ENCODE measurements at regions of chr19 and their contacts with region 1.

Region 1: DNA sequence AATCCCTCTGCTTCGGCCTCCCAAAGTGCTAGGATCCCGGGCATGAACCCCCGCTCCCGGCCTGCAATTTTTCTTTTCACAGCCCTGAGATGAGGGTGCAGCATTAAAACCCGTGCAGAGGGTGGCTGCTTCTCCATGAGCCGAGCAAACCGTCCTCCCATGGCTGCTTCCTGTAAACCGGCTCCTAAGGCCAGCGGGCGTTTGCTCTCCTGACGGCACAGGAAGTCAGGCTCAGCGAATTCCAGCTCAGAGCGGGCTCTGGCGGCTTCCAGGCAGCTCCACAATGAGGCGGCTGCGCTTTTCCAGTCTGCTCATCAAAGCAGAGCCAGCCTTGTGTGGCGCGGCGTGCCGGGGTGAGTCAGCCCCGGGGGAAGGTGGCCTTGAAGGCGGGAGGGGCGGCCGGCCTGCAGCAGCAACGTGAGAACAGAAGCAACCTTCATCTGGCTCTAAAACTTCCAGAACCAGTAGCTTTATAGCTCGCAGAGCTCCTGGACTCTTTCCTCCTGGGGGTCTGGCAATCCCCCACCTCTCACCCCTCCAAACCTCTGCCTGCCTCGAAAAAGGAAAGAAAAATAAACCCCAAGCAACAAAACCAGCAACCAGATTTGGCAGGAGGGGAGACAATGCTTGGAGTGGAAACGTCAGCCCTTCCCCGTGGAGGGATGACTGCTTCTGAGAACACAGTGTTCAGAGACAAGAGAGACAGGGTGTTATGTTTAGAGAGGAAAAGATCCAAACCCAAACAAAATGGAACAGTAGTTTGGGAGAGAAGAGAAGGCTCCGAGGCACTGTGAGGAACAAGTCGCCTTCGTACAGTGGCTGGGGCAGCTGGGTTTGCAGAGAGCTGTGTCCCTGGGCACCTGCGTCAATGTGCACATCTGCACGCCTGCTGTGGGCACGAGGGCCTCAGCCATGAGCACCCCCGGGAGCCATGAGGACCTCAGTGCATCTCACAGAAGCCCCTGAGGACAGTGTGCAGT is 67.8 kb downstream of the GADD45B start:
- DNase-seq: peak; percentile 92 to 93
- ATAC-seq: peak; percentile 78 to 80
- H3K4me3 ChIP-seq: peak overlapping the region in 3 of 4 donors; percentile 22 to 35 (median 31)
- H3K27ac ChIP-seq: peak overlapping the region; percentile 88 to 94 (median 90)
- H3K4me1 ChIP-seq: peaks cover 59 to 71% of the 10 kb centered on the region in 2 donors
- H3K27me3 ChIP-seq: no peaks in the 10 kb centered on the region
- CTCF ChIP-seq: peak; percentile 11 to 28 (median 23)
- POLR2A ChIP-seq: peak; percentile 35 to 67

Region 2: GRCh38 chr19:2424685-2425621 is 118.8 kb before region 1 on chr19:
- in situ Hi-C with region 1: no loop called
- intact Hi-C with region 1: no loop called
- DNase-seq: peak; percentile 29 to 59
- ATAC-seq: no peak
- H3K4me3 ChIP-seq: no peak overlapping the region
- H3K27ac ChIP-seq: peak overlapping the region; percentile 89 to 98 (median 92)
- H3K4me1 ChIP-seq: peaks cover 23 to 30% of the 10 kb centered on the region in 2 donors
- H3K27me3 ChIP-seq: no peaks in the 10 kb centered on the region
- CTCF ChIP-seq: peak; percentile 20 to 59 (median 37)
- POLR2A ChIP-seq: no peak

Region 3: DNA sequence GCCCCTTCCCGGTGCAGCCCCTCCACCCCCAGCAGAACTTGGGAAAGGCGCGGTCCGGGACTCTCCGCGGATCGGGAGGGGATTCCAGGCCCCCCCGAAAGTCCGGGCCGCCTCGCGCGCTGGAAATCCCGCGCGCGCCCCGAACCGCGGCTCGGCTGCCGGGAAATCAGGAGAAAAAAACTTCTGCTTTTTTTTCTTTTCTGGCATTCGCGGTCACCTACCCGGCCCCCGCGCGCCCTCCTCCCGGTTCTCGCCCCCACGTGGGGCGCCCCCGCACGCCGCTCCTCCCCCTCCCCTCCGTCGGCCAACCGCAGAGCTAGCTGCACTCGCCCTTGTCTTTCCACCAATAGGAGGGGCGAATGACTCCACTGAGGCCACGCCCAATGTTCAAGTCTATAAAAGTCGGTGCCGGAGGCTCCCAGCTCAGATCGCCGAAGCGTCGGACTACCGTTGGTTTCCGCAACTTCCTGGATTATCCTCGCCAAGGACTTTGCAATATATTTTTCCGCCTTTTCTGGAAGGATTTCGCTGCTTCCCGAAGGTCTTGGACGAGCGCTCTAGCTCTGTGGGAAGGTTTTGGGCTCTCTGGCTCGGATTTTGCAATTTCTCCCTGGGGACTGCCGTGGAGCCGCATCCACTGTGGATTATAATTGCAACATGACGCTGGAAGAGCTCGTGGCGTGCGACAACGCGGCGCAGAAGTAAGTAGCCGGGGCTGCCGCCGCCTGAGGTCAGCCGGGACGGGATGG is 67.9 kb before region 1 on chr19 and contains the start of gene GADD45B:
- in situ Hi-C with region 1: loop called in 3 of 4 experiments (anchors 5 to 10 kb)
- intact Hi-C with region 1: loop called (anchors 1 kb)
- DNase-seq: peak; percentile 95 to 96
- ATAC-seq: peak; percentile 85 to 86
- H3K4me3 ChIP-seq: peak within 1 kb of the TSS; percentile 66 to 92 (median 84)
- H3K27ac ChIP-seq: peak within 1 kb of the TSS; percentile 81 to 98 (median 90)
- H3K4me1 ChIP-seq: peaks cover 21 to 42% of the 10 kb centered on the region in 2 donors
- H3K27me3 ChIP-seq: no peaks in the 10 kb centered on the region
- CTCF ChIP-seq: peak in 1 of 5 experiments; percentile 15
- POLR2A ChIP-seq: peak; percentile 100
- total RNA-seq, gene GADD45B: 32.2 to 48.7 (median 41.7) TPM

Region 4: DNA sequence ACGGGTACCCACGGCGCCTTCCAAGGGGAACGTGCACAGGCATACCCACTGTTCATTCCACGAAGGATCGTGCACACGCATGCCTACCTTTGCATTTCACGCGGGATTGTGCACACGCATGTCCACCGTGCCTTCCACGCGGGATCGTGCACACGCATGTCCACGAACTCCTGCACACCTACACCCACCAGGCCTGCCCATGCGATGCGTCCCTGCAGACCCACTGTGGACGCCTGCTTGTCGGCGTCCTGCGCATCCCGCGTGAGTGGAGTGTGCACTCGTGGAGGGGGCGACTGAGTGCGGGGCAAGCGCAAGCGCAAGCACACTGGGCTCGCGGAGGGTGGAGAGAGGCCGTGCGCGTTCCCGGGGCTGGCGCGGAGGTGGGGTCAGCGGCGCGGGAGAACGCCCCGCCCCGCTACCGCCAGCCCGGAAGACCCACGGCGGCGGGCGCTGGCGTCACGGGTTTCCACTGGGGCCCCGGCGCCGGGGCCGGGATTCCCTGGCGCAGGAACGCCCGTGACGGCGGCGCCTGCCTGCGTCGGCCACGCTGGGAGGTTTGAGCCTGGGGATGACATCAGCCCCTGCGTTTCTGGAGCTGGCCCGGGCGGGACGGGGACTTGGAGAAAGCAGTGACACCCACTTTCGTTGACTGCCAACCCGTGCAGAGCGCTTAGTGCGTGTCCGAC is 49.2 kb before region 1 on chr19:
- in situ Hi-C with region 1: no loop called
- intact Hi-C with region 1: loop called (anchors 5 kb)
- DNase-seq: peak; percentile 46 to 71
- ATAC-seq: peak; percentile 50 to 57
- H3K4me3 ChIP-seq: peak overlapping the region; percentile 57 to 80 (median 60)
- H3K27ac ChIP-seq: peak overlapping the region; percentile 89 to 95 (median 91)
- H3K4me1 ChIP-seq: peaks cover 27 to 45% of the 10 kb centered on the region in 2 donors
- H3K27me3 ChIP-seq: no peaks in the 10 kb centered on the region
- CTCF ChIP-seq: no peak
- POLR2A ChIP-seq: peak in 1 of 2 donors; percentile 15

Region 5: GRCh38 chr19:2578901-2579677 is 35.3 kb after region 1 on chr19:
- in situ Hi-C with region 1: no loop called
- intact Hi-C with region 1: loop called (anchors 1 kb)
- DNase-seq: peak; percentile 81 to 88
- ATAC-seq: peak; percentile 87 to 88
- H3K4me3 ChIP-seq: peak overlapping the region; percentile 55 to 66 (median 60)
- H3K27ac ChIP-seq: peak overlapping the region; percentile 81 to 89 (median 88)
- H3K4me1 ChIP-seq: peaks cover 32 to 38% of the 10 kb centered on the region in 2 donors
- H3K27me3 ChIP-seq: no peaks in the 10 kb centered on the region
- CTCF ChIP-seq: peak; percentile 96 to 98 (median 98)
- POLR2A ChIP-seq: peak in 1 of 2 donors; percentile 24

Region 6: DNA sequence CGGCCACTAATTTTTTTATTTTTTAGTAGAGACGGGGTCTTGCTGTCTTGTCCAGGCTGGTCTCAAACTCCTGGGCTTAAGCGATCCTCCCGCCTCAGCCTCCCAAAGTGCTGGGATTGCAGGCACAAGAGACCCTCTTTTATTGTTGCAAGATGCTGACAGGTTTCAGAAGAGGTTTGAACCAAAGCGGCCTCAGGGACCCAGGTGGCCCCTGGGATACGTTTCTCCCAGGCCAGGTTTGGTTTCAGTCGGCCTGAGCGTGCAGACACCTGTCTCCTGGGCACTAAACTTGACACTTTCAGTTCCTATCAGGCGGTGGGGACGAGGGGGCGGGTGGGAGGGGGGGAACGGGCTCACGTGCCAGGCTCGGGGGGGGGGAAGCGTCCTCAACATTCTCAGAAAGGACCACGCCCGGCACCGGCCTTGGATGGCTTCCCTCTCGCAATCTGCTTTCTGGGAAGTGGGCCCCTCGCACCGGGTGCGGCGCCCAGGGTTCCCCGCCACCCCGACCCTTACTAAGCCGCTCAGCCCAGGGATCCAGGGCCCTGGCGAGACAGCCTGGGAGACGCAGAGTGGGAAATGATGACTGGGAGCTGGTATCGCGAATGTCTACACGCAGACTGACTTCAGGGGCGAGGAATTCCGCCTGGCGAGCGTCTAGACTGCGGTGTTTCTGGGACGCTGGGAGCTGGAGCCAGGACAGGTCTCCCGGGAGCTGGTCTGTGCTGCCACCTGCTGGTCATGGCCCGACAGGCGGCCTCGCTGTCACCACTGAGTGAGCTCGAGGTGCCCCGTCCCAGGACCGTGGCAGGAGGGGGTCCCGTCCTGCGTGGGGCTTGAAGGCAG is 67.1 kb after region 1 on chr19:
- in situ Hi-C with region 1: no loop called
- intact Hi-C with region 1: loop called (anchors 2 kb)
- DNase-seq: peak; percentile 80 to 83
- ATAC-seq: peak; percentile 95 to 96
- H3K4me3 ChIP-seq: peak overlapping the region; percentile 52 to 88 (median 64)
- H3K27ac ChIP-seq: peak overlapping the region; percentile 72 to 84 (median 84)
- H3K4me1 ChIP-seq: no peaks in the 10 kb centered on the region
- H3K27me3 ChIP-seq: no peaks in the 10 kb centered on the region
- CTCF ChIP-seq: peak; percentile 94 to 99 (median 99)
- POLR2A ChIP-seq: peak in 1 of 2 donors; percentile 13

Region 7: GRCh38 chr19:2627319-2627829 is 83.6 kb after region 1 on chr19:
- in situ Hi-C with region 1: no loop called
- intact Hi-C with region 1: loop called (anchors 1 kb)
- DNase-seq: peak; percentile 89 to 93
- ATAC-seq: peak; percentile 93 to 96
- H3K4me3 ChIP-seq: no peak overlapping the region
- H3K27ac ChIP-seq: peak overlapping the region; percentile 81 to 94 (median 88)
- H3K4me1 ChIP-seq: peaks cover 19 to 24% of the 10 kb centered on the region in 2 donors
- H3K27me3 ChIP-seq: no peaks in the 10 kb centered on the region
- CTCF ChIP-seq: peak in 1 of 5 experiments; percentile 53
- POLR2A ChIP-seq: peak; percentile 83 to 92

Region 8: DNA sequence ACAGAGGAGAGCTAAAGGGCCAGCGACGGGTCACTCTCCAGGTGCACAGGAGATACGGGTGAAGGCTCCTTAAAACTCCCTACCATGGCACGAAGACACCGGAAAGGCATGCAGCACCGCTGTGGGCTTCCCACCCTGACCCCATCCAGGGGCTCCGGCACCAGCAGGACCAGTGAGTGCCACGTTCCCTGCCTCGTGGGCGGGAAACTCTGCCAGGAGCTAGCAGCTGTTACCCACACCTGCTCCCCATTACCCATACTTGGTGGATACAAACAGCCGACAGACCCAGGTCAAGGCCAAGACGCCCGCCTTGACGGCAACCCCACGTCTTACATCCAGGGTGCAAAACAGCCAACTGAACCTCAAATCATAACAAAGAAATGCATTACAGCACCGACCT is 102.1 kb after region 1 on chr19:
- in situ Hi-C with region 1: no loop called
- intact Hi-C with region 1: no loop called
- DNase-seq: no peak
- ATAC-seq: no peak
- H3K4me3 ChIP-seq: no peak overlapping the region
- H3K27ac ChIP-seq: no peak overlapping the region
- H3K4me1 ChIP-seq: no peaks in the 10 kb centered on the region
- H3K27me3 ChIP-seq: no peaks in the 10 kb centered on the region
- CTCF ChIP-seq: no peak
- POLR2A ChIP-seq: no peak

Region 9: DNA sequence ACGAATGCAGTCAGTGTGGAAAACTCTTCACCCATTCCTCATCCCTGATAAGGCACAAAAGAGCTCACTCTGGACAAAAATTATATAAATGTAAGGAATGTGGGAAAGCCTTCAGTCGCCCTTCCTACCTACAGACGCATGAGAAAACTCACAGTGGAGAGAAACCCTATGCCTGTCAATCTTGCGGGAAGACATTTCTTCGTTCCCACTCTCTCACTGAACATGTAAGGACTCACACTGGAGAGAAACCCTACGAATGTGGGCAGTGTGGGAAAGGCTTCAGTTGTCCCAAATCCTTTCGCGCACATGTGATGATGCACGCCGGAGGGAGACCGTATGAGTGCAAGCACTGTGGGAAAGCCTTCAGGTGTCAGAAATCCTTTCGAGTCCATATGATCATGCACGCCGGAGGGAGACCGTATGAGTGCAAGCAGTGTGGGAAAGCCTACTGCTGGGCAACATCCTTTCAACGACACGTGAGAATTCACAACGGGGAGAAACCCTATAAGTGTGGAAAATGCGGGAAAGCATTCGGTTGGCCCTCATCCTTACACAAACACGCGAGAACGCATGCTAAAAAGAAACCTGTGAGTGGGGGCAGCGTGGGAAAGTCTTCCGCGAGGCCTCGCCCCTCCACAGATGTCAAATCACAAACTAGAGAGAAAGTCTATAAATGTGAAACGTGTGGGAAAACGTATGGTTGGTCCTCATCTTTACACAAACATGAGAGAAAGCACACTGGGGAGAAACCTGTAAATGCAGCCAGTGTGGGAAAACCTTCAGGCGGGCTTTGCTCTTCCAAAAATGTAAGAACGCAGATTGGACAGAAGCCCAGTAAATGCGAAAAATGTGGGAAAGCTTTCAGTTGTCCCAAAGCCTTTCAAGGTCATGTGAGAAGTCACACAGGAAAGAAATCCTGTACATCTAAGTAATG is 333.9 kb after region 1 on chr19:
- in situ Hi-C with region 1: no loop called
- intact Hi-C with region 1: no loop called
- DNase-seq: no peak
- ATAC-seq: no peak
- H3K4me3 ChIP-seq: peak overlapping the region in 1 of 4 donors; percentile 6
- H3K27ac ChIP-seq: no peak overlapping the region
- H3K4me1 ChIP-seq: no peaks in the 10 kb centered on the region
- H3K27me3 ChIP-seq: no peaks in the 10 kb centered on the region
- CTCF ChIP-seq: no peak
- POLR2A ChIP-seq: no peak

Measured in gastrocnemius medialis (tissue), 4 donors.